ENCODE measurements at regions of chr12 and their contacts with region 1.

Region 1: DNA sequence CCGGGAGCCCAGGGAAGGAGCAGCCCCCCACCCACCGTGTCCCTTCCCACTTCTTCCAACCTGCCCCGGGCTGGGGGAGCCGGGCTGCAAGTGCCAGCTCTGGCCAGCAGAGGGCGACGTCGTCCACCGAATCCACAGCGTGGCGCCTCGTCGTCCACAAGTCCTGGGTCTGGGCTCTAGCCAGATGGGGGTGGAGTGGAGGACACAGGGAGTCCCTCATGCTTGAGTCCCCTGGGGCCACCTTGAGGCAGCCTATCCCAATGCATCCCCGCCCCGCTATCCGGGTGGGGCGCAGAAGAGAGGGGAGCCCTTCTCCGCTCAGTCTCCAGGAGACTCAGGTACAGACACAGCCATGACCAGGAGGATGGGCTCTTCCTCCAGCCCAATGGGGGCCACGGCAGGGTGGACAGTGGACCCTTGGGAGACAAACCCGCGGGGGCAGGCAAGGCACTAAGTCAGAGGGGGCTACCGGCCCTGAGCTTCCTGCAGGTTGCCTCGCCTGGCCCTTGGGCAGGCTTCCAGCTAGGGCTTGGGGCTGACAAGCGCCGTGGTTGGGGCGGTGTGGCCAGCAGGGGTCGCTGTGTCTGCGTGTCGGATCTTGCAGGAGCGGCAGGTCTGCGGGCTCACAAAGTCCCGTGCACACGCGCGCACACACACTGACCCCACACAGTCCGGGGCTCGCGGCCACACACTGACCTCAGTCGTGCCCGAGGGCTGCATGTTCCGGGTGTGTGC is 5.5 kb downstream of the AQP5 start:
- H3K4me3 ChIP-seq: peak overlapping the region; percentile 31
- H3K27ac ChIP-seq: peak overlapping the region; percentile 32; the same call in 1 of the 2 replicates
- H3K4me1 ChIP-seq: no peaks in the 10 kb centered on the region
- CTCF ChIP-seq: peak; percentile 97

Region 2: DNA sequence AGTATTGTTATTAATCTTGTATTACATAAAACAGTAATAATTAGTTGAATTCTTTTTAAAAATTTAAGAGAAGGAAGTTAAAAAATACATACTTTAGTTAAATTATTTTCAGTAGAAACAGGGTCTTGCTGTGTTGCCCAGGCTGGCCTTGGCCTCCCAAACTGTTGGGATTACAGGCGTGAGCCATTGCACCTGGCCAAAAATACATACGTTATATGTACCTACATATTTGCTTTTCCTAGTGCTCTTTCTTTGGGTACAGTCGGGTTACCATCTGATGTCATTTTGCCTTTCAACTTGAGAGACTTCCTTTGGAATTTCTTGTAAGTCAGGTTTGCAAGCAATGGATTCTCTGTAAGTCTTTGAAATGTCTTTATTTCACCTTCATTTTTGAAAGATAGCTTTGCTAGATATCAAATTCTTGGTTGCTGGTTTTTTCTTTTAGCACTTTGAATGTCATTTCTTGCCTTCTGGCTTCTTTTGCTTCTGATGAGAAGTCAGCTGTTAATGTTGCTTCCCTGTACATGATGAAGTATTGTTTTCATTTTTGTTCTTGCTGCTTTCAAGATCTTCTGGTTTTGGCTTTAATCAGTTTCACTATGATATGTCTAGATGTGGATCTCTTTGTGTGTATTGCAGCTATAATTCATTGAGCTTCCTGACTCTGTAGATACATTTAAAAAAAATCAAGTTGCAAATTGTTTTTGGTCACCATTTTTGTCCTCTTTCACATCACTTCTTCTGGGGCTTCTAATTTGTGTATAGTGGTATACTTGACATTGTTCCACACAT is 515.5 kb before region 1 on chr12:
- CTCF ChIA-PET with region 1: no interaction called
- POLR2A ChIA-PET with region 1: no interaction called
- H3K4me3 ChIP-seq: no peak overlapping the region
- H3K27ac ChIP-seq: no peak overlapping the region
- H3K4me1 ChIP-seq: no peaks in the 10 kb centered on the region
- CTCF ChIP-seq: no peak

Region 3: DNA sequence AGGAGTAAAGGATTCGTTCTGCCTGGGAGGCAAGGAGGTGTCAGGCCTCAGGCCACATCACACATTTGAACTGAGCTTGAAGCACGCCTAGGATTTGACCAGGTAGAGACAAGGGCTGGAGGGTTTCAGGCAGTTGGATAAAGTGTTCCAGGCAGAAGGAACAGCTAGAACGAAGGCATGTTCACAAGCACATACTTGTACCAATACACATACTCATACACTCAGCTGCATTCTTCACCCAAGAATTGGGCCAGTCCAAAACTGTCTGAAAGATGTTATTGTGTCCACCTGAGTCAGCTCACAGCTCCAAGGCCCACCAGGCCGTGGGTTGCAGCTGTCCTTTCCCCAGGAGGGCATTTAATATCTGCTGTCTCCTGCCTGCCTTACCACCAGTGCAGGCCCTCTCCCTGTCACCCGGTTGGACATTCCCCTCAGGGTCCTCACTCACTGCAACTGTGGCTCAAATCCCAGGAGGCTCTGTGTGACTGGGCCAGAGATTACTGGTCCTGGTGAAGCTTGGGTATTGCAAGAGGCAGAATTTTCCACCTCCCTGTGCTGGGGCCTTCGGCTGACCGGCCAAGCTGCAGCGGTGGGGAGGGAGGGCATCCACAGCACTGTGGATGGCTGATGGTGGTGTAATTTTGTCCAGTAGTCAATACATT is 29.4 kb before region 1 on chr12:
- CTCF ChIA-PET with region 1: interaction called, 11 read pairs
- POLR2A ChIA-PET with region 1: interaction called, 4 read pairs
- H3K4me3 ChIP-seq: no peak overlapping the region
- H3K27ac ChIP-seq: no peak overlapping the region
- H3K4me1 ChIP-seq: no peaks in the 10 kb centered on the region
- CTCF ChIP-seq: no peak

Region 4: DNA sequence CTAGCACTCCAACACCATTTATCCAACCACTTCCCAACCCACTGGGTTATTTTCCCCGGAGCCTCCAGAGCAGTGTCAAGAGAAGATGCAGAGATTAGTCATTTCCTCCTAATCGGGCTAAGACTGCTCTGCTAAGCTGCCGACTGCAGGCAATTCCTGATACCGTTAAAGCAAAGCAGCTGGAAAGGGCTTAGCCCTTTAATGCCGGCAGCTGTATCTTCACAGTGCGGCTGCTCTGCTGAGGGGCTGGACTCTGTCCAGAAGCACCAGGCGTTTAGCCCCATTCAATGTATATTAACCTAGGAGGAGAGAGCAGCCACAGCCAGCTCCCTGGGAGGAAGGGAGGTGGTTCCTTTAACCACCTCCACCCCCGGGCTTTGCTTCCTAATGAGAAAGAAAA is 16.7 kb after region 1 on chr12:
- CTCF ChIA-PET with region 1: interaction called, 104 read pairs
- POLR2A ChIA-PET with region 1: no interaction called
- H3K4me3 ChIP-seq: no peak overlapping the region
- H3K27ac ChIP-seq: no peak overlapping the region
- H3K4me1 ChIP-seq: no peaks in the 10 kb centered on the region
- CTCF ChIP-seq: no peak

Region 5: DNA sequence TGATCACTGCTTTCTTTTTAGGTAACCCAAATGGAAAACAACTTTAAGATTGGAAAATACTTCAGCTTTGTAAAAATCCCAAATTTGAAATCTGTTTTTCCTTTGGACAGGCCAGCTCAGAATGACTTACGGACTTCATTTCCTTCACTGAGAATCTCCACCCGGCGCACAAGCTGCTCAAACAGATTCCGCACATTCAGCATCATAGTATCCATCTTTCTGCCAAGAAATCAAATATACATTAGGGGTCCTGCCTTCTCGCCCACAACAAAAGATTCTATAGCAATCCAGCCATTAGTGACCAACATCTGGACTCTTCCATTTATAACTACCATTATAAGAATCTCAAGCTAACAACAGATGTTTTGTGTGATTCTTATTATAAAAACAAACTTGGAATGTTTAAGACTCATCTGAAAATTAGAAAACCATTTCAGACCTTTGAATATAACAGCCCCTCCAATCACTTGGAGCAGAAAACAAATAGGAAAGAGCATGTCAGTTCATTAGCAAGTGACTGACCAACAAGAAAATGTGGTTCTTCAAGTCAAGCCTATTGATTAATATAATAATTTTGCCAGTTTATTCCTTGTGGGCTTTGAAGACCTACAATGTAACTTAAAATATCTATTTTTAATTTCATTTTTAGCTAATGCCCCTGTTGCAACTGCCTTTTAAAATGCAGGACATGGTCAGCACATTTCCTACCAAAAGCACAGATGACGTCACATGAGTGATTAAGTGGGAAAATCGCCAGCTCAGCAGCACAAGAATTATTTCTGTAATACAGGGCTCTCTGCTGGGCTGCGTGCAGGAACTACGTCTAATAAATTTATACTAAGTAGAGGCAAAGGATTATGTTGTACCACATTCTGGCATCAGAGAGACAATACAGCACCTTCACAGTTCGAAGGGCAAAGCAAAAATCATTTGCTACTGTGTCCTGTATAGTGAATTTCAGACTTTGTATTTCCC is 49.6 kb after region 1 on chr12:
- CTCF ChIA-PET with region 1: interaction called, 23 read pairs
- POLR2A ChIA-PET with region 1: no interaction called
- H3K4me3 ChIP-seq: no peak overlapping the region
- H3K27ac ChIP-seq: peak overlapping the region; percentile 13; the same call in 1 of the 2 replicates
- H3K4me1 ChIP-seq: peaks cover 12% of the 10 kb centered on the region
- CTCF ChIP-seq: no peak

Region 6: DNA sequence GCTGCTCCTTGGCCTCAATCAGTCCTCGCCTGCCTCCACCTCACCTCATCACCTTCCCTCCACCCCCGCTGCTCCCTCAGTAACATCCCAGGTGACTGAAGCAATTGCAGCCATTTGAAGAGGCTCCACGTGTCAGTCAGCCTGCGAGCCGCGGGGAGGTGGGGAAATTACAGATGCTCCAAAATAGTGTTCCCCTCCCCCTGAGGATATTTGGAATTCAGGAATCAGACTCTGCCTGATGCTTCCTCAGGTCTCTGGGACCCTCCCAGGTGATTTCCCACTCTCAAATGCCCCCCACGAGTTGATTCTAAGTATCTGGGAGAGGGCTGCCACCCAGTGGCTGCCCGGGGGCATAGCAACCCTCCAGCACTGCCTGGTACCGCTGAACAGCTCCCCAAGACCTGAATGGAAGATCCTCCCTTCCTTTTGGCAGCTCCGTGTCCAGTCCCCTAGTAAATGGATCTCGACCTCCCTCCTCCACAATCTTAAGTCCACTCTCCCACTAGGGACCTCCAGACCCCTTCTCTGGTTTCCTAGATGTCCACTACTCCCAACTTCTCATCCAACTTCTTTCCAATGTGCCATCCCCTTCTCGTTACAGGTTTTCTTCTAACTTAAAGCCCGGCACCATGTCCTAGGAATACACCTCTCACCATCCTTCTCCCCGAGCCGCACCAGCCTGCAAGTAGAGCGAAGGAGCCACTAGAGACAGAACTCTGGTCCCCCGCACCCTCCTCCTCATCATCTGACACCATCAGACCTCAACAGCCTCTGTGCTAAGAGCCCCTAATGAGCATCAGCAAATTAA is 88.8 kb after region 1 on chr12:
- CTCF ChIA-PET with region 1: interaction called, 36 read pairs
- POLR2A ChIA-PET with region 1: no interaction called
- H3K4me3 ChIP-seq: no peak overlapping the region
- H3K27ac ChIP-seq: no peak overlapping the region
- H3K4me1 ChIP-seq: no peaks in the 10 kb centered on the region; the same call in 1 of the 2 replicates
- CTCF ChIP-seq: peak; percentile 86

Region 7: GRCh38 chr12:50111693-50112455 is 144.7 kb after region 1 on chr12 and contains the start of gene COX14:
- CTCF ChIA-PET with region 1: interaction called, 18 read pairs
- POLR2A ChIA-PET with region 1: interaction called, 6 read pairs
- H3K4me3 ChIP-seq: peak within 1 kb of the TSS; percentile 75
- H3K27ac ChIP-seq: peak within 1 kb of the TSS; percentile 65
- H3K4me1 ChIP-seq: peaks cover 6% of the 10 kb centered on the region; the same call in 1 of the 2 replicates
- CTCF ChIP-seq: peak; percentile 96; the same call in 1 of the 2 replicates

Region 8: GRCh38 chr12:50283229-50283923 is 316.2 kb after region 1 on chr12 and contains the start of gene LIMA1:
- CTCF ChIA-PET with region 1: no interaction called
- POLR2A ChIA-PET with region 1: no interaction called
- H3K4me3 ChIP-seq: peak within 1 kb of the TSS; percentile 67
- H3K27ac ChIP-seq: peak within 1 kb of the TSS; percentile 63
- H3K4me1 ChIP-seq: peaks cover 4% of the 10 kb centered on the region; the same call in 1 of the 2 replicates
- CTCF ChIP-seq: peak; percentile 56; the same call in 1 of the 2 replicates

Region 9: GRCh38 chr12:50353869-50354593 is 386.8 kb after region 1 on chr12:
- CTCF ChIA-PET with region 1: no interaction called
- POLR2A ChIA-PET with region 1: no interaction called
- H3K4me3 ChIP-seq: no peak overlapping the region
- H3K27ac ChIP-seq: no peak overlapping the region
- H3K4me1 ChIP-seq: no peaks in the 10 kb centered on the region
- CTCF ChIP-seq: no peak

Measured in HEK293 (cell line).